HEK293 (cell line): ENCODE measurements at regions of chr19 and their contacts with region 1.

Region 1: DNA sequence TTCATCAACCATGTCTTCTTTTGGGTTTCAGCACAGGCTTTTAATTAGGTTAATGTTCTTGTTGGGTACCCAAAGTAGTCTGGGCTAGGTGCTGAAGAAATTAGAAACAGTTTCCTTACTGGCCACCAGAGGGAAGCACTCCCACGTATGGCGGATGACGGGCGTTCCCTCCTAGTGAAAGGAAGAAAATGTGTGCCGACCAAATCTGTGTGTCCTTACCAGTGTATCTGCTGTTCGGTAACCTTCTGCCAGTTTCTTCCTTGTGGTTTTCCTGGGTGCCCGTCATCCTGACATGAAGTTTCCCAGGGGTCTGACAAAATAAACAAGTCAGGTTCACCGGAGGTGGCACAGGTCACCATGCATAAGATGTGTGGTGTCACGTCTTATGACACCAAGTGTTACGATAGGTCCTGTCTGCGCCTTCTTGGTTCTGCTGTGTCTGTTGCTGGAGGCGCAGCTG is 6.0 kb upstream of the WDR88 start:
- H3K4me3 ChIP-seq: no peak overlapping the region
- H3K27ac ChIP-seq: 0 out of 2 replicates have a peak overlapping the region, but pooled peaks have one; percentile 11
- H3K4me1 ChIP-seq: peaks cover 4% of the 10 kb centered on the region
- CTCF ChIP-seq: peak; percentile 86

Region 2: DNA sequence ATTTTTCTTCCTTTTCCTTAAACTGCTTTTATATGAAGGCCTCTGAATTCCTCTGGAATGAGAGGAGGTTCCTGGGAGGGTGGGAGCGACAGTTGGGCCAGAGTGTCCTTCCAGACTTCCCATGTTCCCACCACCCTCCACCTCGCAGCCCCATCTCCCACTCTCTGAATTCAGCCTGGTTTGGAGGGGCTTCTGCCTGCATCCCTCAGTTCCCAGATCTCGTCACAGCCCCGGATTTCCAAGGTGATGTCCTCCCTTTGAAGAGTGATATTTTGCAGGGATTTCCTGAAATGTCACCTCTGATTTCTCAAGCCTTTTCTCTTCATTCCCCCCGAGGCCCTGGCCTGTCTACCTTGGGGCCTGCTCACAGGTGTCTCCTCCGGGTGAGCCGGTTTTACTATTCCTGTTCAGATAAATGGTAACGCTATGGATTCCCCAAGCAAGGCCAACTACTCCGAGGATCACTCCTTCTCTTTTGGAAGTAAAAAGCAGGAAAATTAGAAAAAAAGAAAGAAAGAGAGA is 239.7 kb before region 1 on chr19:
- CTCF ChIA-PET with region 1: no interaction called
- POLR2A ChIA-PET with region 1: no interaction called
- H3K4me3 ChIP-seq: no peak overlapping the region
- H3K27ac ChIP-seq: no peak overlapping the region
- H3K4me1 ChIP-seq: peaks cover 9% of the 10 kb centered on the region; the same call in 1 of the 2 replicates
- CTCF ChIP-seq: no peak

Region 3: DNA sequence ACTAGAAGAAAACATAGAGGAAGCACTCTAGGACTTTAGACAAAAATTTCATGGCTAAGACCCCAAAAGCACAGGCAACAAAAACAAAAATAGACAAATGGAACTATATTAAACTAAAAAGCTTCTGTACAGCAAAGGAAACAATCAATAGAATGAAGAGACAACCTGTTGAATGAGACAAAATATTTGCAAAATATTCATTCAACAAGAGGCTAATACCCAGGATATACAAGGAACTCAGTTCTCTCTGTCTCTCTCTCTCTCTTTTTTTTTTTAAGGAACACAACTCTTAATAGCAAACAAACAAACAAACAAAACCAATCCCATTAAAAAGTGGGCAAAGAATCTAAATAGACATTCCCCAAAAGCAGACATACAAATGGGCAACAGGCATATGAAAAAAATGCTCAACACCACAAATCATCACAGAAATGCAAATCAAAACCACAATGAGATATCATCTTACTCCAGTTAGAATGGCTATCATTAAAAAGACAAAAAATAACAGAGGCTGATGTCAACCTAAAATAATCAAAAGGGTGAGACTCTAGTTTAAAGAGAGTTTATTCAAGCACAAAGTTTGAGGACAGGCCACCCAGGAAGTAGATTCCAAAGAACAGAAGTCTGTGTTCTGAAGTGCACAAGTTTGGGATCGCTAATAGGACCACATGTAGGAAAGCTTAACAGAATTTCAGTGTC is 229.3 kb before region 1 on chr19:
- CTCF ChIA-PET with region 1: no interaction called
- POLR2A ChIA-PET with region 1: no interaction called
- H3K4me3 ChIP-seq: no peak overlapping the region
- H3K27ac ChIP-seq: no peak overlapping the region
- H3K4me1 ChIP-seq: peaks cover 10% of the 10 kb centered on the region
- CTCF ChIP-seq: no peak

Region 4: DNA sequence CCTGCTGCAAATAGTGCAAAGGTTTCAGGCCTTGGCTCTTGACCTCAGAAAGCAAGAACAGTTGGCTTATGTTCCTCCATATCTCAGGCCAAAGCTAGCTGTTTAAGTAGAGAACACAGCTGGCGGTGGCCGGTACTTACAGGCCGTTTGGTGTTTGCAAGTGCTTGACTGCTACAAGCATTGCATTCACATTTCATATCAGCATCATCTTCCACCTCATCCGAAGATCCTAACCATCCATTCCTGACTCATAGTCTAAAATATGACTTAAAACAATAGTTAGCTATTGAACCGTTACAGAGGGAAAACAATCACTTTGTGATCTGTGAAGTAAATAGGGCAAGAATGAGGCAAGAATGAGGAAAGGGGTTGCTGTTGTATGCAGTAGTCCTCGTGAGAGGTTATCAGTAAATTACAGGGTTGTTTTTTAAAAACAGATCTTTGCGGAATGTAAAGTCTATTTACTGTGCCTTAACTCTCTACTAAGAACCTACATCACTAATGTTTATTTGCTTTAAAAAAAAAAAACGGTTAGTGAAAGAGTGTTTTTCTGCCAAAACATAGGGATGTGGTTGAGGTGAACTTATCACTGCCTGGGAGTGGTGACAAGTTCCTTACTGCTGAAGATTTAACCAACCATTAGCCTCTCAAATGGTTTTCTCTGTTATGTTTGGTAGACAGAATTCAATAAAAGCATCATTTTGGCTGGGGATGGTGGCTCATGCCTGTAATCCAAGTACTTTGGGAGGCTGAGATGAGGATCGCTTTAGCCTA is 15.6 kb before region 1 on chr19:
- CTCF ChIA-PET with region 1: interaction called, 27 read pairs
- POLR2A ChIA-PET with region 1: no interaction called
- H3K4me3 ChIP-seq: no peak overlapping the region
- H3K27ac ChIP-seq: no peak overlapping the region
- H3K4me1 ChIP-seq: no peaks in the 10 kb centered on the region
- CTCF ChIP-seq: no peak

Region 5: GRCh38 chr19:33406521-33407139 is 280.7 kb after region 1 on chr19:
- CTCF ChIA-PET with region 1: interaction called, 12 read pairs
- POLR2A ChIA-PET with region 1: no interaction called
- H3K4me3 ChIP-seq: no peak overlapping the region
- H3K27ac ChIP-seq: no peak overlapping the region
- H3K4me1 ChIP-seq: no peaks in the 10 kb centered on the region
- CTCF ChIP-seq: peak; percentile 99